ENCODE measurements at regions of chr2 and their contacts with region 1.

Region 1: DNA sequence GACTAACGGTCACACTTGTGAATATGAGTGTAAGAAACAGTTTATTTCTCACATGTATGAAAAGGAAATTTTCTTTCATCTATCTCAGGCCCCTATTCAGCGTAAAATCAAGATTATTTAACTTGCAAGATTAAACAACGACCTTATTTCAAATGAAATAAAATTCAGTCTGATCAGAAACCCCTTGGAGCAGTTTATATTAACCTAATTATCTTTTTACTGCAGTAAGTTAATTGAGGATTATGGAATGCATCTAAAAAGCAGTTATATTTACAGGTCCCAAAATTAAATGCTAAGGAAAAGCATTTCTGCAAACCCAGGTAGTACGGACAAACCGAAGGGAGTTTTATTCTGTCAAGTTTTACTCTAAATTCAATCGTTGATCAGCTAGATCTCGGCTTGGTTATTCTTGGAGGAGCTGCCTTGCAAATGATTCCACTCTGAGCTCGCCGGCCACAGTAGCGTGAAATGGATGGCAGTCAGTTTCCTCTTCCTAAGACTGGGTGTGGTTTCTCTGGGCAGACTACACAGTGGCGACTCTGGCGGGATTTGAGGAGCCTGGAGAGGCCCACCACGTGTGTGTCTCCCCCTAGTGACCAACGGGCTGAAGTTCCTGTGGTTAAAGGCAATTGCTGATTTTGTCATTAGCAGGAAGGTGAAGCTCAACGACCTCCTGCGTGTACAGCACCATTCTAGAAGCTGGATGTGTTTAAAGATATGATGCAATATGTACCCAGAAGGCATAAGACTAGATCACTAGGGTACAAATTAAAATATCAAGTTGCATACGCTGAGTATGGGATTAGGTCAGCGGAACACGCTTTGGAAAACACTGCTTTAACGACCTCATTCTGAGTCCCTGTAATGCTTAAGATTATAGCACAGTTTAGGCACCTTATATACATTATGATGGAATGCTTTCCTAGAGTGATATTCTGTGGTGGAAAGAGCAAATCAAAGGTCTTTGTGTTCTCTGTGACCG is 36.4 kb downstream of the PRKRA start:
- DNase-seq: peak; percentile 93
- H3K4me3 Mint-ChIP-seq: peak overlapping the region; percentile 79
- H3K27ac Mint-ChIP-seq: peak overlapping the region; percentile 90
- H3K4me1 Mint-ChIP-seq: peaks cover 12% of the 10 kb centered on the region
- H3K27me3 Mint-ChIP-seq: no peaks in the 10 kb centered on the region

Region 2: DNA sequence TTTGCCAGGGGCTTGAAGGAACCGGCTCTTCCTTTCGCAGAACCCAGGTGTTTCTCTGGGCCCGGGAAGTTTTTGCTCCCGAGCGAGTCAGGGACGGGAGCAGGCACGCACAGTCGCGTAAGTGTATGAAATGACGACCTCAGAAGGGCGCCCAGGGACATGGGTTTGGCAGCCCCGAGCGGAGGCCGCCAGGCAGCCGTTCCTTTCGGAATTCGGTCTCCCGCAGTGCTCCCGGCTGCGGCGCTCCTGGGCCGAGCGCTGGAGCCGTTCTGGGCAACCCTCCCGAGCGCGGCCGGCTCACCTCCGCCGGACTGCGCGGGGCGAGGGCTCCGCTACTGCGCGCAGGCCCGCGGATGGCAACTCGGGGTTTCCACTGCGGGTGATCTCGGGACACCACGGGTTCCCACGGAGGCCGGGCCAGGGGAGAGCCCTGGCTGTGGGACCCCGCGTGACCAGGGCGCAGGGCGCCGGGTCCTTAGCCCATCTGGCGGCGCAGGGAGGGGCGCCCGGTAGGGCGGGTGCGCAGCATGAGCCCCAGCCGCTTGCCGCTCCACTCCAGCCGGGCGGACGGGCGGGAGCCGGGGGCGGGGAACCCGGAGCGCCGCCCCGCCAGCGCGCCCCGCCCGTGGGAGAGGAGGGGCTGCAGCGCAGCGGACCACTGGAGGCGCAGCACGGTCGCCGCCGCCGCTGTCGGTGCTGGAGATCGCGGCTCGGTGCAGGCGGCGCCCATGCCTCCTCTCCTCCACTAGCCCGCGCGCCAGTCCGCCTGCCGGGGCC is 220.5 kb before region 1 on chr2 and contains the start of gene OSBPL6:
- CTCF ChIA-PET with region 1: no interaction called
- intact Hi-C with region 1: loop called (anchors 2 kb)
- DNase-seq: peak; percentile 65
- H3K4me3 Mint-ChIP-seq: peak within 1 kb of the TSS; percentile 69
- H3K27ac Mint-ChIP-seq: no peak within 1 kb of the TSS
- H3K4me1 Mint-ChIP-seq: peaks cover 3% of the 10 kb centered on the region
- H3K27me3 Mint-ChIP-seq: peaks cover 51% of the 10 kb centered on the region
- total RNA-seq, gene OSBPL6: 1.9 to 2.3 TPM

Region 3: GRCh38 chr2:178397002-178397605 is 17.5 kb before region 1 on chr2:
- CTCF ChIA-PET with region 1: interaction called, 59 read pairs
- intact Hi-C with region 1: loop called (anchors 1 kb)
- DNase-seq: no peak
- H3K4me3 Mint-ChIP-seq: no peak overlapping the region
- H3K27ac Mint-ChIP-seq: no peak overlapping the region
- H3K4me1 Mint-ChIP-seq: no peaks in the 10 kb centered on the region
- H3K27me3 Mint-ChIP-seq: no peaks in the 10 kb centered on the region

Region 4: DNA sequence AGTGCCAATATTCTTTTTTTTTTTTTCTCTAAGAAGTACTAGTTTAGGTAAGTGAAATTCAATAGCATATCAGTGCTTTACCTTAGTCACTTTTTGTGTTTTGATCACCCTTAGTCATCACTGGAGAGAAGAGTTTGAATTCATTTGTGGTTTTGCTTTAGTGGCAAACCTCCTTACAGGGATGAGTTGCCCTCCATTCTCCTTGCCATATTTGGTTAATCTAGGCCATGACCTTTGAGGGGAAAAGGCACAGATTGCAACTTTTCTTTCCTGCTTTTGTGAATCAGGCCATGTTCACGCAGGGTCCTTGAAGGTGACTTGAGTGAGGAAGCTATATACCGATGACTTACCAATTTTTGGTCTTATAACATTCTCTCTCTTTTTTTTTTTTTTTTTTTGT is 100.1 kb after region 1 on chr2:
- CTCF ChIA-PET with region 1: interaction called, 6 read pairs
- intact Hi-C with region 1: loop called (anchors 2 kb)
- DNase-seq: peak; percentile 69
- H3K4me3 Mint-ChIP-seq: no peak overlapping the region
- H3K27ac Mint-ChIP-seq: peak overlapping the region; percentile 65
- H3K4me1 Mint-ChIP-seq: peaks cover 25% of the 10 kb centered on the region
- H3K27me3 Mint-ChIP-seq: no peaks in the 10 kb centered on the region

Region 5: GRCh38 chr2:178568227-178568626 is 153.7 kb after region 1 on chr2:
- CTCF ChIA-PET with region 1: no interaction called
- intact Hi-C with region 1: no loop called
- DNase-seq: no peak
- H3K4me3 Mint-ChIP-seq: no peak overlapping the region
- H3K27ac Mint-ChIP-seq: no peak overlapping the region
- H3K4me1 Mint-ChIP-seq: no peaks in the 10 kb centered on the region
- H3K27me3 Mint-ChIP-seq: no peaks in the 10 kb centered on the region

Region 6: DNA sequence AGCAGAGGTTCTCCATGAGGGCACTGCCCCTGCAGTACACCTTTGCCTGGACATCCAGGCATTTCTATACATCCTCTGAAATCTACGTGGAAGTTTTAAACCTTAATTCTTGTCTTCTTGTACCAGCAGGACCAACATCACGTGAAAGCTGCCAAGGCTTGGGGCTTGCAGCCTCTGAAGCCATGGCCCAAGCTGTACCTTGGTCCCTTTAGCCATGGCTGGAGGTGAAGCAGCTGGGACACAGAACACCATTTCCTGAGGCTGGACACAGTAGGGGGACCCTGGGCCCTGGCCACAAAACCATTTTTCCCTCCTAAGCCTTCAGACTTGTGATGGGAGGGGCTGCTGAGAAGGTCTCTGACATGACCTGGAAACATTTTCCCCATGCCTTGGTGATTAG is 668.1 kb after region 1 on chr2:
- CTCF ChIA-PET with region 1: no interaction called
- intact Hi-C with region 1: no loop called
- DNase-seq: no peak
- H3K4me3 Mint-ChIP-seq: no peak overlapping the region
- H3K27ac Mint-ChIP-seq: no peak overlapping the region
- H3K4me1 Mint-ChIP-seq: peaks cover 3% of the 10 kb centered on the region
- H3K27me3 Mint-ChIP-seq: no peaks in the 10 kb centered on the region